Posterior vena cava (tissue), 2 donors: ENCODE measurements at regions of chr6 and their contacts with region 1.

Region 1: GRCh38 chr6:134870677-134871498 is 79.0 kb downstream of the ALDH8A1 start:
- DNase-seq: no peak

Region 2: GRCh38 chr6:134853111-134854055 is 17.5 kb before region 1 on chr6:
- intact Hi-C with region 1: loop called in 1 of 2 experiments (anchors 1 kb)
- DNase-seq: no peak

Region 3: GRCh38 chr6:134908906-134909516 is 38.1 kb after region 1 on chr6:
- intact Hi-C with region 1: no loop called
- DNase-seq: peak; percentile 94